AG04450 (cell line): ENCODE measurements at regions of chr11 and their contacts with region 1.

Region 1: DNA sequence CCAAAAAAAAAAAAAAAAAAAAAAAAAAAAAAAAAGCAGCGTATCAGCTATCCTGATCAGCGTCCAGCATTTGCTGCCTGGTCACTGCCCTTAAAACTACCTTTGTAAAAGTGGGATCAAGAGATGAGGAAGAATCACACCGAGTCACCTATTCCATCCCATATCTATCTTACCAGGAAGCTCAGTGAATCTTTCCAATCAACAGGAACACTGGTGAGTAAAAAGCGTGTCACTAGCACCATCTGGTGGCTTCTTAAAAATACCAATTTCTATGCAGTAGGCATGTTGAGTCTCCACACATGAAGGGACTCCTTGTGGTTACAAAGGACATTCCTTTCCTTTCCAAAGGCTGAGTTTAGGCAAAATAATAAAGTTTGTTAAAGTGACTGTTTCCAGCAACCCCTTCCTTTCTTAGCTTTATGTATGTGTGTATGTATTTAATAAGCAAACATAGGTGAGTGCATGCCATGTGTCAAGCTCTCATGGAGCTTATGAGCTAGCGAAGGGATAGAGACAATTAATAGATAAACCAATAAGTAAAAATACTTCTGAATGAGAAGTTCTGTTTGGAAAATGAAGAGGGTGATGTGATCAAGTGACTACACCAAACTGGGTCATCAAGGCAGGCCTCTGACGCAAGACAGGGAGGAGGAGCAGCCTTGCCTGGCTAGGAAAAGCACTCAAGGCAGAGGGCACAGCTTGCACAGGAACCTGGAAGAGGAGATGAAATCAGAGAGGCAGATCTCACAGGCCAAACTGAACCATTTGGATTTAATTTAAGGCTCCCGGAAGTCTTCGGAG is 13.9 kb upstream of the TP53AIP1 start:
- DNase-seq: peak; percentile 47
- H3K4me3 ChIP-seq: no peak overlapping the region
- H3K27ac ChIP-seq: no peak overlapping the region
- H3K27me3 ChIP-seq: peaks cover 5% of the 10 kb centered on the region
- CTCF ChIP-seq: peak; percentile 74

Region 2: DNA sequence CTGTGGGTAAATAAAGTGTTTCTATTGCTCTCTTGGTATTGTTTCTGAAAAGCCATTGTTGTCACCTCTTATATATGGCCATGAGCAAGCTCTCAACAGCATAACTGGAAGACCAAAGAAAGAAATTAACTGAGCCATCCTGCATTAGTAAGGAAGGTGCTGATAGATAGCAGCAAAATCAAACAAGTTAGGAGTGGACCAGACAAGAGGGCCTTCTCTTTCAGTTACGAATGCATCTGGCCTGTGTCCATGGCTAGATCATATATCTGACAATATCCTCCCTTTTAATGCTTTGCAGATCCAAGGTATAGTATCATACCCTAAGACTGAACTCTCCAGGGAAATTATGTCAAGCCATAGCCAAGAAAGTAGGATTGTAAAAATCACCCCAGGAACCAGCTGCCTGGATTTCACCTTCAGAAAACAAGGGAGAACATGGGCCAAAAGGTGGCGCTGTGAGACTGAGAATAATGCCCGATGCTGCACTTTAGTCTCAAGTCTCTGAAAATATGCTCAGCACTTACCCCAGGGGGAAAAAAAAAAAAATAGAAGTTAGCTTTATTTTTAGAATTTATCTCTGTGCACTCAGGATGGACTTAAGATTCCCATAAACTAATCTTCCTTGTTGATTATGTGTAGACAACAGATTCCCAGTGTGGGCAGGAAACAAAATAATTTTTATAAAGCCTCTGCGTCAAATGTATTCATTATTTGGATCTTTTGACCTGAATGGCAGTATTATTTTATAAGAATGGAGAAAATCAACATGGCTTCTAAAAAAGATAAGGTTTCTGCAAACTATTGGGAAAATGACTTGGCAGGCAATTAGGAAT is 784.3 kb before region 1 on chr11:
- CTCF ChIA-PET with region 1: interaction called, 13 read pairs
- POLR2A ChIA-PET with region 1: no interaction called
- DNase-seq: peak; percentile 72
- H3K4me3 ChIP-seq: no peak overlapping the region
- H3K27ac ChIP-seq: no peak overlapping the region
- H3K27me3 ChIP-seq: no peaks in the 10 kb centered on the region
- CTCF ChIP-seq: peak; percentile 83

Region 3: DNA sequence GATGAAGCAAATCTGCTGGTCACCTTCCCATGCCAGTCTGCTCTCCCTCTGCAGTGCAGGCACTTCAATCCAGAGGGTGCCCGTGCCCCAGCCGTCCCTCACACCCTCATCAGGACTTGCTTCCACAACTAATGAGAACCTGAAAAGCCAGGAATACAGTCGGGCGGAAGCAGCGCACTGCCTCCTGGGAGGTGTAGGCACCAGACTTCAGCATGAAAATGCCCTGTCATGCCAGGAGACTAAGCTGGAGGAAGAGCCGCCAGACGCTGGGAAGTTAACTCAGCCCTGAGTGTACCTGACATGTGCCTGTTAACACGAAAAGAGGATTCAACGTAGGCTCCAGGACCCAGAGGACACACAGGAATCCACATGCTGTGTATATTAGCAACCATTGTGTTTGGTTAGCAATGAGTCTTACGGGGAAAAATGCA is 302.8 kb before region 1 on chr11:
- CTCF ChIA-PET with region 1: no interaction called
- POLR2A ChIA-PET with region 1: no interaction called
- DNase-seq: no peak
- H3K4me3 ChIP-seq: no peak overlapping the region
- H3K27ac ChIP-seq: no peak overlapping the region
- H3K27me3 ChIP-seq: peaks cover 12% of the 10 kb centered on the region
- CTCF ChIP-seq: no peak

Region 4: DNA sequence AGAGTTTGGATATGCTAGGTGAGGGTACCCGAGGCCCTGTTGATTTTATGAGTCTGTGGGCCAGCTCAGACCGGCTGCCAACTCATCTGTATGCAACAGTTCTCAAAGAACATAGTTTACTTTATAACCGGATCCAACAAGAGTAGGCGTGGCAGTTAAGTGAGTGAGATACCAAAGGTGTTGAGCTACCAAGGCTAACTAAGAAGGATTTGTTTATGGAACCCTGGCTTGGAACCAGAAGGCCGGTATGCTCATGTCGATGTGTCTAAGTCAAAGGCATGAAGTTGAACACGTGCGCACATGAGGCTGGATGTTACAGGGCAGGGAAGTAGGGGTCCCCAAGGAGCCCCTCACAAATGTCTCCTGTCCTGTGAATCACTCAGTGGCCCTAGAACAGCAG is 89.3 kb before region 1 on chr11 and contains the start of gene KCNJ1:
- CTCF ChIA-PET with region 1: no interaction called
- POLR2A ChIA-PET with region 1: no interaction called
- DNase-seq: no peak
- H3K4me3 ChIP-seq: no peak within 1 kb of the TSS
- H3K27ac ChIP-seq: no peak within 1 kb of the TSS
- H3K27me3 ChIP-seq: peaks cover 12% of the 10 kb centered on the region
- CTCF ChIP-seq: no peak
- polyA plus RNA-seq, gene KCNJ1: not detected in 2 replicates

Region 5: GRCh38 chr11:128884703-128885338 is 71.8 kb before region 1 on chr11:
- CTCF ChIA-PET with region 1: interaction called, 348 read pairs
- POLR2A ChIA-PET with region 1: interaction called, 6 read pairs
- DNase-seq: peak; percentile 33
- H3K4me3 ChIP-seq: no peak overlapping the region
- H3K27ac ChIP-seq: no peak overlapping the region
- H3K27me3 ChIP-seq: peaks cover 59% of the 10 kb centered on the region
- CTCF ChIP-seq: peak; percentile 84

Region 6: GRCh38 chr11:128905345-128906184 is 51.0 kb before region 1 on chr11:
- CTCF ChIA-PET with region 1: interaction called, 36 read pairs
- POLR2A ChIA-PET with region 1: no interaction called
- DNase-seq: no peak
- H3K4me3 ChIP-seq: peak overlapping the region; percentile 60
- H3K27ac ChIP-seq: no peak overlapping the region
- H3K27me3 ChIP-seq: peaks cover 6% of the 10 kb centered on the region
- CTCF ChIP-seq: peak; percentile 49

Region 7: DNA sequence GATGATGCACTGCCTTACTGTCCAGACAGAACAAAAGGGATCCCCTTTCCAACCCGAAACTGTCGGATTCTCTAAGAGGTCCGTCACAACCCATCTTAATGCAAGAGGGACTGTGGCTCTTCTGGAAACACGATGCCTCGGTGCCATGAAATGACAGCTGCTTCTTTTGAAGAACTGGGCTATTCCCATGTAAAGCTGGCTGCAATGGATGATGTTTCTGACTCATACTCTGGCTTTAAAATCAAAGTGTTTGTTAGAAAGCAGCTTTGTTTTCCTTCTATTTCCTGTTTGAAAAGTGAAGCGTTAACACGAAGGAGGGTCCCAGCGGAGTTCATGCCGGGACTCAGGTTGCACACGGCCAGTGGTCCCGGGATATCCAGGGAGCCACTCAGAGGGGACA is 17.0 kb before region 1 on chr11:
- CTCF ChIA-PET with region 1: interaction called, 12 read pairs
- POLR2A ChIA-PET with region 1: no interaction called
- DNase-seq: no peak
- H3K4me3 ChIP-seq: no peak overlapping the region
- H3K27ac ChIP-seq: no peak overlapping the region
- H3K27me3 ChIP-seq: peaks cover 43% of the 10 kb centered on the region
- CTCF ChIP-seq: no peak

Region 8: DNA sequence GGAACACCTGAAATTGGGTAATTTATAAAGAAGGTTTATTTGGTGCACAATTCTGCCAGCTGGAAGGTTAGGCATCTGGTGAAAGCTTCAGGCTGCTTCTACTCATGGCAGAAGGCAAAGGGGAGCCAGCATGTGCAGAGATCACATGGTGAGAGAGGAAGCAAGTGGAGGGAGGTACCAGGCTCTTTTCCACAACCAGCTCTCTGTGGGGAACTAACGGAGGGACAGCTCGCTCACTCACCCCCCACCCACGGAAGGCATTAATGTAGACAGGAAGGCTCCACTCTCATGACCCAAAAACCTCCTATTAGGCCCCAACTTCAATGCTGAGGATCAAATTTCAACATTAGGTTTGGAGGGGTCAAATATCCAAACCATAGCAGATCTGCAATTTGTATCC is 311.1 kb after region 1 on chr11:
- CTCF ChIA-PET with region 1: no interaction called
- POLR2A ChIA-PET with region 1: no interaction called
- DNase-seq: no peak
- H3K4me3 ChIP-seq: no peak overlapping the region
- H3K27ac ChIP-seq: no peak overlapping the region
- H3K27me3 ChIP-seq: no peaks in the 10 kb centered on the region
- CTCF ChIP-seq: no peak